ENCODE measurements at regions of chr19 and their contacts with region 1.

Region 1: GRCh38 chr19:58278157-58279041 is at the start of gene ZNF8:
- DNase-seq: peak; percentile 99
- H3K4me3 Mint-ChIP-seq: peak within 1 kb of the TSS; percentile 89
- H3K27ac Mint-ChIP-seq: peak within 1 kb of the TSS; percentile 97
- H3K4me1 Mint-ChIP-seq: peaks cover 18% of the 10 kb centered on the region
- H3K27me3 Mint-ChIP-seq: no peaks in the 10 kb centered on the region
- CTCF ChIP-seq: no peak
- total RNA-seq, gene ZNF8: 4.9 and 5.1 TPM in 2 replicates

Region 2: DNA sequence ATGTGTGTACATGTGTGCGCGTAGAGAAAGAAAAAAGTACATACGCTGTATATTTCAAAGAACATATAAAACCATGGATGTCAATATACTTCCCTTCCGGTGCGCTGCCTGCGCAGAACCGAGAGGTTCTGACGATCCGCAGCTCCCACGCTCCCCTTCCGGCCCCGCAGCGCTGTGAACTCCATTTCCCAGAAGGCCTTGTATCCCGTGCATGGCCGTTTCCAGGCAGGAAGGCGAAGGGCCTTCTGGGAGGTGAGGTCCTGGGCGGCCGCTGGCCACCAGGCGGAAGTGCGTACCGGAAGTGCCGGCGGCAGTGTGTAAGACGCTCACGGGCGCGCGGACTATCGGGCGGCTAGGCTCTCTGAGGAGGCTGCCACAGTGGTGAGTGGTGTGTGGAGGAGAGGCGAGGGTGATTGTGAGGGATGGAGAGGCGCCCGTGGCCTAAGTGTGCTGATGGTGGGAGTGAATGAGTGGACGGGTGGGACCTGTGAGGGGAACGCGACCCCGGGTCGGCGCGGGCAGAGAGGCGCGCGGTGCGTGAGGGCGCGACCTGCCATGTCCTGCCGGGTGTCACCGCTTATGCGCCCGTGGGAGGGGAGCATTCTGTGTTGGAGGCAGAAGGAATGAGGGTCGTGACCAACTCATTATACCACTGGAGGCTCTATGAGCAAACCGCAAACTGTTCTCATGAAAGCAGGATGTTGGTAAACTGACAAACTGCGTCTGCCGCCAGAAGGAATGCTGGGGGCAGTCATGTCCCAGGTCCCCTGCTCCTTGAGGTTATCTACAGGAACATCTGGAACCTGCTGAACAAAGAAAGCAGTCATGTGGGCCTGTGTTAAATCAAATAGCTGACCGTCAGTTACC is 26.9 kb after region 1 on chr19 and contains the start of gene ERVK3-1:
- CTCF ChIA-PET with region 1: interaction called, 3 read pairs
- POLR2A ChIA-PET with region 1: interaction called, 12 read pairs
- intact Hi-C with region 1: no loop called
- DNase-seq: peak; percentile 97
- H3K4me3 Mint-ChIP-seq: peak within 1 kb of the TSS; percentile 96
- H3K27ac Mint-ChIP-seq: peak within 1 kb of the TSS; percentile 98
- H3K4me1 Mint-ChIP-seq: peaks cover 10% of the 10 kb centered on the region
- H3K27me3 Mint-ChIP-seq: no peaks in the 10 kb centered on the region
- CTCF ChIP-seq: no peak
- total RNA-seq, gene ERVK3-1: 63.1 and 64.6 TPM in 2 replicates

Measured in MCF 10A (cell line).